ENCODE measurements at regions of chr1 and their contacts with region 1.

Region 1: DNA sequence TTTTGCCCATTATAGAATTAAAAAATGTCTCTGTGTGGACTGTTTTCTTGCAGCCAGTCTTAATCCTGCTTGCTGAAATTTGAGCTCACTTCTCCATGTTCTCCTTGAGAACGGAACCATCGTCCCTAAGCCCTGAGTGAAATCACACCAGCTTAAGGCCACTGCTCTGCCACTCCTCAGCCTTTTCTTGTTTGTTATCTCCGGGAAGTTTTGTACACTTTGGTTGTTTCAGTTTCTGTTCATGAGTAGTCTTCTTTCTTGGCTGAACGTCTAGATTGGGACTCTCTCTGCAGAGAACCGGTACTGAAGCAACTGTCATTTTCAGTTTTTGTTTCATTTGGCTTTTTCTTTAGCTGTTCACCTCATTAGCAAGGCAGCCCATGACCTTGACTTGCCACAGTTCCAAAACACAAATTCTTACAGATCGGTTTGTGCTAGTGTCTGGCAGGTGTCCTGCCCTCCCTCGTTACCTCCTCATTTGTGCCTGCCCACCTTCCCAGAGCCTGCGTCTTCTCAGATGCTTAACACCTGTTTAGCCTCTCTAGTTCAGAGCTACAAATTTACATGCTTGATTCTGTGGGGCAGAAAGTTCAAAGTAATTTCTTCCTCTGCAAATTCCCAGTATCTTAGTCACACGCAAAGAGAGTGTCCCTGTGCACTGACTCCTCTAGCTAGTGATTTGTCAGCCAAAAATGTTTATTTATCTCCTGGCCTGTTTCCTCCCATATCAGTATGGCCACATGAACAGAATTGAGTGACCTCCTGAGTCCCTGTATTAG is 12.4 kb downstream of the PSEN2 start:
- DNase-seq: peak in 4 of 5 donors; percentile 50 to 63 (median 53)
- H3K4me3 ChIP-seq: peak overlapping the region; percentile 30 to 53
- H3K4me3 Mint-ChIP-seq: peak overlapping the region; percentile 75 to 85 (median 78)
- H3K27ac ChIP-seq: peak overlapping the region; percentile 44
- H3K27ac Mint-ChIP-seq: peak overlapping the region; percentile 78 to 92 (median 86)
- H3K4me1 ChIP-seq: peaks cover 36% of the 10 kb centered on the region
- H3K4me1 Mint-ChIP-seq: peaks cover 32 to 51% (median 43%) of the 10 kb centered on the region in 4 donors
- H3K27me3 ChIP-seq: no peaks in the 10 kb centered on the region
- H3K27me3 Mint-ChIP-seq: no peaks in the 10 kb centered on the region

Region 2: DNA sequence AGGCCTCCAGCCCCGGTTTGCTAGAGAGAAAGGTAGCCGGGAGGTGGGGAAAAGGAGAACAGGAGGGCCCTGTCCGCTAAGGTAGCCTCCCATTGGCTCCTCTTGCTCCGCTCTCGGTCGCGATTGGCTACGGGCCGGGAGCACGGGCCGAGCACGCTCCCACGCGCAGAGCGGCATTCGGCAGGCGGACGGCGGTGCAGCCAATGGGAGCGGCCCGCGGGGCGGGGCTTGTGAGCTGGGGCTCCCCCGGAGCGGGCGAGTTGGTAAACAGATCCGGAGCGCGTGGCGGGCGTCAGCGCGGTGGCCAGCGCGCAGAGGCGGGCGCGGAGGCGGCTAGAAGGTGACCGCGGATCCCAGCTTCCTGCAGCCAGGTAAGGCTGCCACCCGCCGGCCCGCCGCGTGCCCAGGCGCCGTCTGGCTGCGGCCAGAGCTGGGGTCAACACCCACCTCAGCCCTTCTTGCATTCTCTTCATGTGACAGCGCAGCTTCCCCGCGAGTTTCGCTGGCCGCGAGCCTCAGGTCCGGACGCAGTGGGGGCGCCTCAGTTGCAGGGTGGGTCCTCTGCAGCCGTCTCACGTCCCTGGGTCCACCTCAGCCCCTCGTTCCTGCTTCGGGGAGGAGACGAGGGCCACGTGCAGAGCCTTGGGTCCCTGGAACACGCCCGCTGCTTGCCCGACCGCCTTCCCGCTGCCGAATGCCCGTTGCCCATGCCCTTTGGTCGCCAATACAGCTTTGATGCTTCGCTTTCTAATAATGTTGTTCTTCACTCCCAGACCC is 57.4 kb after region 1 on chr1 and contains the start of gene COQ8A:
- CTCF ChIA-PET with region 1: interaction called, 5 read pairs
- POLR2A ChIA-PET with region 1: interaction called, 64 read pairs
- intact Hi-C with region 1: loop called (anchors 5 kb)
- DNase-seq: peak; percentile 98 to 100 (median 99)
- H3K4me3 ChIP-seq: peak within 1 kb of the TSS; percentile 75 to 84
- H3K4me3 Mint-ChIP-seq: peak within 1 kb of the TSS; percentile 89 to 95 (median 92)
- H3K27ac ChIP-seq: peak within 1 kb of the TSS; percentile 87
- H3K27ac Mint-ChIP-seq: peak within 1 kb of the TSS; percentile 96 to 98 (median 97)
- H3K4me1 ChIP-seq: peaks cover 40% of the 10 kb centered on the region
- H3K4me1 Mint-ChIP-seq: peaks cover 31 to 67% (median 50%) of the 10 kb centered on the region in 4 donors
- H3K27me3 ChIP-seq: no peaks in the 10 kb centered on the region
- H3K27me3 Mint-ChIP-seq: peaks cover 0 to 2% of the 10 kb centered on the region in 2 donors
- total RNA-seq, gene COQ8A: 69.2 to 70.7 TPM

Measured in CD4-positive, alpha-beta memory T cell (primary cell).